Endothelial cell of umbilical vein (primary cell): ENCODE measurements at regions of chr14 and their contacts with region 1.

Region 1: DNA sequence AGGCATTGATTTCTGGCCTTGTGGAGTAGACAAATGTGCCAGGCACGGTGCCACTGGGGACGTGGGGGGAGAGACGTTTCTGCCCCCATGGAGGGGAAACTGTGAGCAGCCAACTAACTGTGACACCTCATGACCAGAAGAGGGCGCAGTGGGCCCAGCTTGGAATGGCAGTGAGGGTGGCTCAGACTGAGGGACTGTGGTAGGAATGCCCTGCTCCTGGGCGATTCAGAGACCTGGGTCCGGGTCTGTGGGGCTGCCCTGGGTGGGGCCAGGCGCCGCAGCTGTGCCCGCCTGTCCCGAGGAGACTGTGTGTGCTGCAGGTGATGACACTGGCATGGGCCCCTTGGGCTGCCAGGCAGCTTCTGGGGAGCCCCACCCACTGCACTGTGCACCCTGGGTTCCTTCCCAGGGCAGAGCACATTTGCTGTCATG is 60.6 kb downstream of the SLC25A47 start:
- DNase-seq: peak; percentile 57
- H3K4me3 ChIP-seq: no peak overlapping the region
- H3K27ac ChIP-seq: no peak overlapping the region
- H3K4me1 ChIP-seq: peaks cover 32% of the 10 kb centered on the region
- H3K27me3 ChIP-seq: no peaks in the 10 kb centered on the region
- CTCF ChIP-seq: peak; percentile 86 to 90
- POLR2A ChIP-seq: no peak

Region 2: GRCh38 chr14:100406505-100407131 is 22.9 kb after region 1 on chr14:
- CTCF ChIA-PET with region 1: interaction called, 32 read pairs
- POLR2A ChIA-PET with region 1: no interaction called
- dilution Hi-C with region 1: no loop called
- intact Hi-C with region 1: no loop called
- DNase-seq: no peak
- H3K4me3 ChIP-seq: no peak overlapping the region
- H3K27ac ChIP-seq: no peak overlapping the region
- H3K4me1 ChIP-seq: peaks cover 4% of the 10 kb centered on the region
- H3K27me3 ChIP-seq: no peaks in the 10 kb centered on the region
- CTCF ChIP-seq: no peak
- POLR2A ChIP-seq: no peak

Region 3: GRCh38 chr14:100524933-100525243 is 141.1 kb after region 1 on chr14:
- CTCF ChIA-PET with region 1: interaction called, 11 read pairs
- POLR2A ChIA-PET with region 1: no interaction called
- dilution Hi-C with region 1: no loop called
- intact Hi-C with region 1: loop called (anchors 2 kb)
- DNase-seq: no peak
- H3K4me3 ChIP-seq: no peak overlapping the region
- H3K27ac ChIP-seq: no peak overlapping the region
- H3K4me1 ChIP-seq: no peaks in the 10 kb centered on the region
- H3K27me3 ChIP-seq: no peaks in the 10 kb centered on the region
- CTCF ChIP-seq: peak; percentile 13 to 41
- POLR2A ChIP-seq: no peak

Region 4: GRCh38 chr14:100654814-100655740 is 271.3 kb after region 1 on chr14:
- CTCF ChIA-PET with region 1: interaction called, 136 read pairs
- POLR2A ChIA-PET with region 1: no interaction called
- dilution Hi-C with region 1: no loop called
- intact Hi-C with region 1: loop called (anchors 1 kb)
- DNase-seq: no peak
- H3K4me3 ChIP-seq: no peak overlapping the region
- H3K27ac ChIP-seq: no peak overlapping the region
- H3K4me1 ChIP-seq: no peaks in the 10 kb centered on the region
- H3K27me3 ChIP-seq: peaks cover 4 to 15% of the 10 kb centered on the region in 2 experiments
- CTCF ChIP-seq: peak; percentile 70 to 90
- POLR2A ChIP-seq: no peak

Region 5: GRCh38 chr14:100723135-100723829 is 339.5 kb after region 1 on chr14:
- CTCF ChIA-PET with region 1: no interaction called
- POLR2A ChIA-PET with region 1: no interaction called
- dilution Hi-C with region 1: no loop called
- intact Hi-C with region 1: no loop called
- DNase-seq: no peak
- H3K4me3 ChIP-seq: no peak overlapping the region
- H3K27ac ChIP-seq: no peak overlapping the region
- H3K4me1 ChIP-seq: no peaks in the 10 kb centered on the region
- H3K27me3 ChIP-seq: peaks cover 36 to 53% of the 10 kb centered on the region in 2 experiments
- CTCF ChIP-seq: no peak
- POLR2A ChIP-seq: no peak

Region 6: DNA sequence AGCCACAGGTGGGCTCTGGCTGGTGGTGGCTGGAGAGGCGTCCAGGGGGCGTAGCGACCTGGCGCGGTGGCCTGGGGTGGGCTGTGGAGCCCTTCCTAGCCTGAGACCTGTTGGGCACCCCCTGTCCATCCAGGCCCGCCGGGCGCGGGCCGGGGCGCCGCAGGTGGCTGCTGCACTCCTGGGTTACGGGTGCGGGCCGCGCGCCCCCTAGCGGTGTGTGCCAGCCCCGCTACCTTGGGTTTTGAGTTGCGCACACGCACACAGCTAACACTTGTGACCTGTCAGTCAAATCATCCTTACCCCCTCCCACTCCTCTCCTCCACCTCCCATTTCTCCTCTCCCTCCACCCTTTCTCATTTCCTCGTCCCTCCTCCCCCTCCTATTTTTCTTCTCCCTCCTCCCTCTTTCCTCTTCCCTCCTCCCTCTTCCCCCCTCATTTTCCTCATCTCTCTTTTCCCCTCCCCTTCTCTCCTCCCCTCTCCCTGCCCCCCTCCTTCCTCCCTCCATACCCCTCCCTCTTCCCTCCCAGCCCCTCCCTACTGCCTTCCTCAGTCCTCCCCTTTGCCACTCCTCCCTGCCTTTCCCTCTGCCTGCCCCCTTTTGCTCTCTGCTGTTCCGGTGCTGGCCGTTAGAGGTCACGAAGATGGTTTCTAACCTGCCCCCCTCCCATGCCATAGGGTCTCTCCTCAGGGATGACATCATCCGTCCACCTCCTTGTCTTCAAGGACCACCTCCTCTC is 444.5 kb after region 1 on chr14:
- CTCF ChIA-PET with region 1: interaction called, 16 read pairs
- POLR2A ChIA-PET with region 1: no interaction called
- dilution Hi-C with region 1: no loop called
- intact Hi-C with region 1: loop called (anchors 1 kb)
- DNase-seq: peak; percentile 72
- H3K4me3 ChIP-seq: peak overlapping the region; percentile 67 to 78 (median 72)
- H3K27ac ChIP-seq: no peak overlapping the region
- H3K4me1 ChIP-seq: no peaks in the 10 kb centered on the region
- H3K27me3 ChIP-seq: peaks cover 0 to 4% of the 10 kb centered on the region in 2 experiments
- CTCF ChIP-seq: peak; percentile 74 to 75
- POLR2A ChIP-seq: no peak

Region 7: GRCh38 chr14:101235335-101236103 is 851.8 kb after region 1 on chr14:
- CTCF ChIA-PET with region 1: interaction called, 13 read pairs
- POLR2A ChIA-PET with region 1: no interaction called
- dilution Hi-C with region 1: no loop called
- intact Hi-C with region 1: no loop called
- DNase-seq: peak; percentile 55
- H3K4me3 ChIP-seq: no peak overlapping the region
- H3K27ac ChIP-seq: no peak overlapping the region
- H3K4me1 ChIP-seq: no peaks in the 10 kb centered on the region
- H3K27me3 ChIP-seq: no peaks in the 10 kb centered on the region
- CTCF ChIP-seq: peak; percentile 79 to 95
- POLR2A ChIP-seq: no peak